ENCODE measurements at regions of chr12 and their contacts with region 1.

Region 1: DNA sequence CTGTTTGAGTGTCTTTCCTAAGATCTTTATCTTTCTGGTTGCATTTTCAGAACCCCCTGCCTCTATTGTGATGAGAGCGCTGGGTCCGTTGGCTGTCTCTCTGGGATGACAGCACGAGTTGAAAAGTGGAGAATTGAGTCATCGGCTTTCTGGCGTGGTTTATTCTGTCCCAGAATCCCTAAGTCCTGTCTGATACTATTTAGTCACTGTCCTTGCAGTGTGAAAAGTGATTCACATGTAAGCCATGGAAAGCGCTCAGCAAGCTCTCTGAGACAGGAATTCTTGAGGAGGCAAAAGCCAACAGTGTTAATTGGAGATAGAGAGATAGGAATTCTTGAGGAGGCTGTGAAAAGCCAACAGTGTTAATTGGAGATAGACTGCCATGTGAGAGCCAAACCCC is 121.7 kb downstream of the CHST11 start:
- DNase-seq: peak in 3 of 4 experiments; percentile 28 to 70 (median 46)
- ATAC-seq: peak; percentile 31
- H3K4me3 ChIP-seq: no peak overlapping the region
- H3K27ac ChIP-seq: peak overlapping the region; percentile 65
- H3K4me1 ChIP-seq: peaks cover 11 to 51% of the 10 kb centered on the region in 2 experiments
- H3K27me3 ChIP-seq: no peaks in the 10 kb centered on the region
- CTCF ChIP-seq: no peak
- EP300 ChIP-seq: no peak
- POLR2A ChIP-seq: no peak
- RAD21 ChIP-seq: no peak

Region 2: DNA sequence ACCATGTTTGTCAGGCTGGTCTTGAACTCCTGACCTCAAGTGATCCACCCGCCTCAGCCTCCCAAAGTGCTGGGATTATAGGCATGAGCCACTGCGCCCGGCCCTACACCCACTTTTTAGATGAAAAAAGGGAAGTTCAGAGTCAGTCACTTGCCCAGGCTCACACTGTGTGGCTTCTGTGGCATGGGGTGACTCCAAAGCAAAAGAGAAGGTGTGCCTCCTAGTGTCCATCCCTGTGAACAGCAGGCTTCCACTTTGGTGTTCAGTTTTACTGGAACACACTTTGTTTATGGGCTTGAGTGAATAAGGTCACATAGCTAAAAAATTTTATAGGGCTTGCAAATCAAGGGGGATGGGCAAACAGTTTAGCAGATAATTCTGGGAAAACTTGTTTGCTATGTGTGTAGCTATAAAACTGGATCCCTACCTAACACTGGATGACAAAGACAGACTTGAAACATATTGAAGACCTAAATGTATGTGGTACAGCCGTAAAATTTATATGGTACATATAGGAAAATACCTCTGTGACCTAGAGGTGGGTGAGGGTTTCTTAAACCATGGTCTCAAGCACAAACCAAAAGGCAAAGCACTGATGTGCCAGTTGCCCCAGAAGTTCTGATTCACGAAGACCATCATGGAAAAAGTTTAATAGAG is 220.0 kb before region 1 on chr12:
- CTCF ChIA-PET with region 1: no interaction called
- POLR2A ChIA-PET with region 1: no interaction called
- in situ Hi-C with region 1: no loop called
- intact Hi-C with region 1: no loop called
- DNase-seq: peak; percentile 66 to 78 (median 69)
- ATAC-seq: peak; percentile 86
- H3K4me3 ChIP-seq: no peak overlapping the region
- H3K27ac ChIP-seq: no peak overlapping the region
- H3K4me1 ChIP-seq: no peaks in the 10 kb centered on the region; a peak in 1 of 5 replicates
- H3K27me3 ChIP-seq: no peaks in the 10 kb centered on the region; a peak in 1 of 5 replicates
- CTCF ChIP-seq: peak; percentile 87 to 91 (median 89)
- EP300 ChIP-seq: no peak
- POLR2A ChIP-seq: no peak
- RAD21 ChIP-seq: peak; percentile 91 to 96

Region 3: DNA sequence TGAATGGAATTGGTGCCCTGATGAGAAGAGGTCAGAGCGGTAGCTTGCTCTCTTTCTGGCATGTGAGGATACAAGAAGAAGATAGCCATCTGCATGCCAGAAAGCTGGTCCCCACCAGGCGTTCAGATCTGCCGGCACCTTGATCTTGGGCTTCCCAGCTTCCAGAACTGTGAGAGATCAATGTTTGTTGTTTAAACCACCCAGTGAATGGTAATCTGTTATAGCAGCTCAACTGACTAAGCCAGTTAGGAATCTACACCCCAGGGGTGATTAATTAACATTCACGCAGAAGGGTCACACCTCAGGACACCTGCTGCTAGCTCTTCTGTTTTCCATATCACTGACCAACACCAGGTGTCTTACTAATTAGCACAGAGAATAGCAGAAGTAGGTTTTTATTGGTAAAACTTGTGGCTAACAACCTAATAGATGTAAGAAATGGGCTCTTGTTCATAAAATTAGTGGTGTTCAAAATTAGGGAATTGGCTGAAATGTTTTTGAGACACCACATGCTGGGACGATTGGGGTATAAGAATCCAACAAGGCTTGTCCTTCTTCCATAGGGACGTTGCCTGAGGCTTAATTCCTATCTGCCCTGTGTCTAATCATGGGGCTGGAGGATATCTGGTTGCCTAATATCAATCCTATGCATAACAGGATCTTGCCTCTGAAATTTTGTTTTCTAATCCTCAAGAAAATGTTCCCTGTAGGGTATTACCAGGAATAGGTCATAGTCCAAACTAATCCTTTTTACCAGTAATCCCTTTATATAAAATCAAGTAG is 163.7 kb before region 1 on chr12:
- CTCF ChIA-PET with region 1: no interaction called
- POLR2A ChIA-PET with region 1: no interaction called
- in situ Hi-C with region 1: no loop called
- intact Hi-C with region 1: no loop called
- DNase-seq: peak in 2 of 4 experiments; percentile 17 to 23
- ATAC-seq: no peak; the same call in 2 of the 3 replicates
- H3K4me3 ChIP-seq: no peak overlapping the region
- H3K27ac ChIP-seq: no peak overlapping the region
- H3K4me1 ChIP-seq: peaks cover 3 to 8% of the 10 kb centered on the region in 2 experiments; a peak in 2 of 5 replicates
- H3K27me3 ChIP-seq: no peaks in the 10 kb centered on the region; a peak in 1 of 5 replicates
- CTCF ChIP-seq: no peak
- EP300 ChIP-seq: no peak
- POLR2A ChIP-seq: no peak
- RAD21 ChIP-seq: no peak

Region 4: GRCh38 chr12:104604070-104604994 is 25.9 kb after region 1 on chr12:
- CTCF ChIA-PET with region 1: no interaction called
- POLR2A ChIA-PET with region 1: interaction called, 4 read pairs
- in situ Hi-C with region 1: no loop called
- intact Hi-C with region 1: loop called (anchors 1 kb)
- DNase-seq: peak; percentile 79 to 90 (median 84)
- ATAC-seq: peak; percentile 88
- H3K4me3 ChIP-seq: peak overlapping the region; percentile 10; the same call in 1 of the 2 replicates
- H3K27ac ChIP-seq: peak overlapping the region; percentile 89
- H3K4me1 ChIP-seq: peaks cover 36 to 61% of the 10 kb centered on the region in 2 experiments
- H3K27me3 ChIP-seq: no peaks in the 10 kb centered on the region
- CTCF ChIP-seq: no peak
- EP300 ChIP-seq: 0 out of 2 replicates have a peak, but pooled peaks have one; percentile 39
- POLR2A ChIP-seq: no peak
- RAD21 ChIP-seq: peak; percentile 15 to 26; a peak in 3 of 4 replicates

Region 5: DNA sequence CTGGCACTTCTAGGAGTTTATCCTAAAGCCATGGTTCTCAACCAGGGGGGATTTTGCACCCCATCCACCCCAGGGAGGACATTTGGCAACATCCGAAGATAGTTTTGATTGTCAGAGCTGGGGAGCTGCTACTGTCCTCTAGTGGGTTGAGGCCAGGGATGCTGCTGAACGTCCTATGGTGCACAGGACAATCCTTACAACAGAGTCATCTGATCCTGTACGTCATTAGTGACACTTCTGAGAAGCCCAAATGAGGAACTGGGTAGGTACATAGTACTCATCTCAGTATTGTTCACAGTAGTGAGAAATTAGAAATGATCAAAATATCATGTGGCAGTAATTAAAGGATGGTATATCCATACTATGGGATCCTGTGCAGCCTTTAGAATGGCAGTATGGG is 63.4 kb after region 1 on chr12:
- CTCF ChIA-PET with region 1: no interaction called
- POLR2A ChIA-PET with region 1: no interaction called
- in situ Hi-C with region 1: no loop called
- intact Hi-C with region 1: loop called (anchors 5 kb)
- DNase-seq: no peak
- ATAC-seq: peak; percentile 35; the same call in 2 of the 3 replicates
- H3K4me3 ChIP-seq: no peak overlapping the region
- H3K27ac ChIP-seq: no peak overlapping the region
- H3K4me1 ChIP-seq: peaks cover 7 to 10% of the 10 kb centered on the region in 2 experiments; a peak in 3 of 5 replicates
- H3K27me3 ChIP-seq: no peaks in the 10 kb centered on the region
- CTCF ChIP-seq: no peak
- EP300 ChIP-seq: no peak
- POLR2A ChIP-seq: no peak
- RAD21 ChIP-seq: no peak; a peak in 1 of 4 replicates

Region 6: GRCh38 chr12:104910196-104910840 is 331.9 kb after region 1 on chr12:
- CTCF ChIA-PET with region 1: no interaction called
- POLR2A ChIA-PET with region 1: no interaction called
- in situ Hi-C with region 1: no loop called
- intact Hi-C with region 1: no loop called
- DNase-seq: no peak
- ATAC-seq: no peak
- H3K4me3 ChIP-seq: no peak overlapping the region
- H3K27ac ChIP-seq: no peak overlapping the region
- H3K4me1 ChIP-seq: no peaks in the 10 kb centered on the region; a peak in 1 of 5 replicates
- H3K27me3 ChIP-seq: peaks cover 10 to 11% of the 10 kb centered on the region in 2 experiments; a peak in 3 of 5 replicates
- CTCF ChIP-seq: no peak
- EP300 ChIP-seq: no peak
- POLR2A ChIP-seq: no peak
- RAD21 ChIP-seq: no peak

Measured in K562 (cell line).